IMR-90 (cell line): ENCODE measurements at regions of chr1 and their contacts with region 1.

Region 1: DNA sequence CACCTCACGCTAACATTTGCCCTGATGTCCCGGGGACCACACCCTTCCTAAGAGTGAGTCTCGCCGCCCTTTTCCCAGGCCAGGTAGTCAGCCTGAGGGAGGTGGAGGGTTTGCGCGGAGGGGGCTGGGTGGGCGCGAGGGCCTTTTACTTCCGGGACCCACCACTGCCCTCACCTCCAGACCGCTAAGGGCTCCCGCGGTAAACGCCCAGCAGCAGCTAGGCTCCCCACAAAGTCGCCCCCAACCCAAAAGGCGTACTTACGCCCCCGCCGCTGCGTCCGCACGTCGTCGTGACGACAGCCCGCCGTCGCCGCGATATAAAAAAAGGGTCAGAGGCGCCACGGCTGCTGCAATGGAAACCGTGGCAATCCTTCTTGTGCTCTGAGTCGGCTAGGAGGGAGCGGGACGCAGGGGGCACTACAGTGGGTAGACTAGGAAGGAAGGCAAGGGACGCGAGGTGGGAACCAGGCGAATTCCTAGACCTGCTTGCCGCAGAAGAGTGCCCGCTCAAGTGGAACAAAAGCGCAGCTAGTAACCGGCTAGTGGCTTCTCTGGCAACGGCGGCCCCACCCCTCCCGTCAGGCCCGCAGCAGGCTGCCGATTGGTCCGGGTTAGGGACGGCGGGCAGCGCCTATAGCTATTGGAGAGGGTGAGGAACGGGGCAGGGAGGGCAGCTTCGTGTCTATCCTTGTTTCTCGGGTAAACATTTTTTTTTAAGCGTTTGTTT is at the start of gene ODF2L:
- DNase-seq: peak; percentile 74
- ATAC-seq: peak; percentile 100
- H3K4me3 ChIP-seq: peak within 1 kb of the TSS; percentile 84
- H3K27ac ChIP-seq: peak within 1 kb of the TSS; percentile 88
- H3K4me1 ChIP-seq: peaks cover 2% of the 10 kb centered on the region; the same call in 1 of the 2 replicates
- H3K27me3 ChIP-seq: peaks cover 4% of the 10 kb centered on the region; the same call in 1 of the 2 replicates
- CTCF ChIP-seq: no peak
- POLR2A ChIP-seq: peak; percentile 78
- RAD21 ChIP-seq: no peak
- total RNA-seq, gene ODF2L: 10.4 and 20.0 TPM in 2 replicates

Region 2: DNA sequence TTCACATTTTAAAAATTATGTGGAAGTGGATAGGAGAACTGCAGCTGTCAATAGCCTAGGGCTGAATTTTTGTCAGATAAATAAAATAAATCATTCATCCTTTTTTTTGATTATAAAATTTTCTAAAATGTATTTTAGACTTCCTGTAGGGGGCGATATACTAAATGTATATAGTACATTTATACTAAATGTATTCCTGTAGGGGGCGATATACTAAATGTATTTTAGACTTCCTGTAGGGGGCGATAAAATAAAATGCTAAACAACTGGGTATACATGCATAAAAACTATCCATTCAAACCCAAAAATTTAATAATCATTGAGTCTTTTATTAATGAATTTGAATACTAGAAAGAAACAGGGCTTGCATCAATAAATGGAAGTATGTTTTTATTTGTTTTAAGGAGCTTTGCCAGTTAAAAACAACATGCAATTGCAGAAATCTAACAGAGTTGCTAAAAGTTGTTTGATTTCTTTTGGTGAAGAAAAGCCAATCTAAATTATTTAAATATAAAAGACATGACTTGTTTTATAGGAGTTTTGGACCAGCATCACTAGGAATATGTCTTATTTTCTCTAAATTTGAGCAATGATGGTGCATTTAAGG is 104.2 kb after region 1 on chr1:
- CTCF ChIA-PET with region 1: interaction called, 3 read pairs
- POLR2A ChIA-PET with region 1: no interaction called
- dilution Hi-C with region 1: no loop called
- in situ Hi-C with region 1: no loop called
- intact Hi-C with region 1: loop called (anchors 5 kb)
- DNase-seq: peak; percentile 32
- ATAC-seq: no peak
- H3K4me3 ChIP-seq: no peak overlapping the region
- H3K27ac ChIP-seq: no peak overlapping the region
- H3K4me1 ChIP-seq: peaks cover 2% of the 10 kb centered on the region
- H3K27me3 ChIP-seq: peaks cover 10% of the 10 kb centered on the region
- CTCF ChIP-seq: peak; percentile 100; the same call in 1 of the 2 replicates
- POLR2A ChIP-seq: no peak
- RAD21 ChIP-seq: peak; percentile 24; the same call in 1 of the 2 replicates